Right ventricle myocardium superior (tissue), 1 donor: ENCODE measurements at regions of chr14 and their contacts with region 1.

Region 1: DNA sequence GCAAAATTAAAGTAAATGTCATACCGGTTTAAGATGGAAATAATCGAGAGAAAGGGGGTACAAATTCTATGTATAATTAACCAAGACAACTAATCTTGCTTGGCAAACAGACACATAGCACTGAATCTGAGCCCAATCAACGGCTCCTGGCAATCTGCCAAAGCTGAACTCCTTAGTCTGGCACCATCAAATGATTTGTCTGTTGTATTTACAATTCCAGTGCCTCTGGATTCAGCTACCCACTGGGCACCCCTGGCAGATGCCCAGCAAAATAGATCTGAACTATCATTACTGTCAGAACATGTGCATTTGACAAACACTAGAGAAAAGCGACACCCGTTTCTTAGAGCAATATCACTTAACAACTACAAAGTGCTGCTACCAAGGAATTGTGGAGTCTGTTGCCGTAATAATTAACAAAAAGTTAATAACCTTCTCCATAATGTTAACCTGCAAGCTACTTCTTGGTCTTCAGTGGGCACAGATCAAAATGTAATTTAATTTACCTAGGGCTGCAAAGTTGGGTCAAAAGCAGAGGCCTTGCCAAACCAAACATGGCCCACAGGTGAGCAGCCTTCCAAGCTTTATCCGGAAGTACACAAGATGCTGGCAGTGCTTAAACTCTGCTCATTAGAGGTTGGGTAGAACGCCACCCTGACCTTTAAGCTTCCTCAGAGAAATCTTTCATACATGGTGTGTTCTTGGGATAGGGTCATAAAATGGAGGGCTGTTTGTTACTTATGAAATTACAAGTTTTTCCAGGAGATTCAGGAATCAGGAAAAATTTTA is 7.6 kb downstream of the EGLN3 start:
- DNase-seq: no peak
- ATAC-seq: no peak

Region 2: GRCh38 chr14:33839193-33840076 is 103.9 kb before region 1 on chr14:
- intact Hi-C with region 1: loop called (anchors 10 kb)
- DNase-seq: peak; percentile 46
- ATAC-seq: peak; percentile 91

Region 3: GRCh38 chr14:34059855-34060638 is 116.8 kb after region 1 on chr14:
- intact Hi-C with region 1: loop called (anchors 10 kb)
- DNase-seq: peak; percentile 90
- ATAC-seq: peak; percentile 95